ENCODE measurements at regions of chr4 and their contacts with region 1.

Region 1: DNA sequence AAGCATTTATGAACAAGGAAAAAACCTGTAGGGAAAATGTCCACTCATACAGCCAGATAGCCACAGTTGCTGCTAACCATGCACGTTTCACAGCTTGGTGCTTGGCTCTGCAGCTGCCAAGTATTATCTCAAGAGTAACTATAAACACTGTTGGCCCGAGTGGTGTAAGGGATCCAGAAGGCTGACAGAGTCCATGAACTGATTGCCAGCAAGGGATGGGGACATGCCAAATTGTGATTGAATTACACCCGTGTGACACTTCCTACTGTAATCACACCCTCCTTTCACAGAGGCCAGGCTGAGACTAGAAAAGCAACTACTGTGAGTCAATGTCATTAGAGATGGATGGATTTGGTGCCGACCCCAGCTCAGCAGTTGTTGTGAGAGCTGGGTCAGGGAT is 223.9 kb upstream of the ANKRD50 start:
- DNase-seq: peak; percentile 66
- ATAC-seq: peak; percentile 94 to 98

Region 2: GRCh38 chr4:124712372-124713184 is 223.8 kb before region 1 on chr4 and contains the start of gene ANKRD50:
- intact Hi-C with region 1: loop called in 1 of 2 experiments (anchors 10 kb)
- DNase-seq: peak; percentile 94
- ATAC-seq: peak; percentile 91 to 92
- total RNA-seq, gene ANKRD50: 6.8 to 11.0 TPM

Region 3: DNA sequence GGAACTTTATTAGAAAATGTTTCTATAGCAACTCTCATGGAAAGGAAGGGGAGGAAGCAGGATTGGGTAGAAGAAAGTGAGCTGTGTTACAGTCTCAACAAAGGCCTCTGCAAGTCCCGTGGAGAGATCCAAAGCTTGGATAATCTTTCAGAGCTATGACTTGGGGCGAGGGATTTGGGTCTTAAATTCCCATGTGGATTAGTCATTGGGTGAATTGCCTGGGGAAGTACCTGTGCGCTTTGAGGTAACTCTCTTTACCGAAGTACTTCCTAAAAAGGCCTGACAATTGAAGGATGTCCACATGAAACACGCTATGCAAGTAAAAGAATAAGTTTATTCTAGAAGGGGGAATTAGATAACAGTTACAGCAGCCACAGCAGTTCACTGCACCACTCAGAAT is 90.1 kb before region 1 on chr4:
- intact Hi-C with region 1: no loop called
- DNase-seq: no peak
- ATAC-seq: no peak

Measured in left cardiac atrium (tissue), 4 donors.